Caco-2 (cell line): ENCODE measurements at regions of chr3 and their contacts with region 1.

Region 1: DNA sequence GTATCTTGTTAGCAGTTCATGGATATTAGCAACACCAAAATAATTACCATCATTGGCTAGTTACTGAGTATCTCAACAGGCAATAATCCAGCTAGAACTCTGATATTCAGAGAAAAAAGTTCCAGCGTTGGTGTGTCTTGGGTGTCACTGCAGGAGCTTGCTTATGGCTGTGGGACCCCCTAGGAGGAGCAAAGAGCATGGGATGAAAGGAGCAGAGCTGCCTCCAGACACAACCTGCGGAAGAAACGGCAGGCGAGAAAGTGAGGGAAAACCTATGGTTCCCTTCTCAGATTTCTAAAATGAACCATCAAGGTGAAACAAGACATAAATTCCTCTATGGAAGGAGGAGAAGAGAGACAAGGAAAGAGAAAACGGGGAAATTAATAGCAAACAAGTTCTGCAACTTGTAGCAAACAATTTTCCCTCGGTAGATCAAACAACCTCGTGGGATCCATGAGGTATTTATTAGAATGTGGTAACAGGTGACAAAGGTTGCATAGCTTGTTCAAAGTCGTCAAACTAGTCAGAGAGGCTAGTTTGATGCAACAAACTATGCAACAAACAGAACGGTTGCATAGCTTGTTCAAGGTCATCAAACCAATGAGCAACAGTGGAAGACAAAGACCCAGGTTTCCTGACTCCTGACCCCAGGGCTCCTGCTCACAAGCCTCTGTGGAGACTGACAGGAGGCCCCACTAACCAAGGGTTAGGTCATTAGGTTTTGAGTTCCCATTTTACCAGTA is 20.8 kb downstream of the MB21D2 start:
- DNase-seq: peak; percentile 74 to 81
- H3K4me3 ChIP-seq: no peak overlapping the region
- H3K4me3 Mint-ChIP-seq: peak overlapping the region; percentile 60
- H3K27ac Mint-ChIP-seq: peak overlapping the region; percentile 89
- H3K4me1 ChIP-seq: peaks cover 59% of the 10 kb centered on the region
- H3K4me1 Mint-ChIP-seq: peaks cover 66% of the 10 kb centered on the region
- H3K27me3 ChIP-seq: no peaks in the 10 kb centered on the region
- H3K27me3 Mint-ChIP-seq: no peaks in the 10 kb centered on the region
- CTCF ChIP-seq: no peak

Region 2: DNA sequence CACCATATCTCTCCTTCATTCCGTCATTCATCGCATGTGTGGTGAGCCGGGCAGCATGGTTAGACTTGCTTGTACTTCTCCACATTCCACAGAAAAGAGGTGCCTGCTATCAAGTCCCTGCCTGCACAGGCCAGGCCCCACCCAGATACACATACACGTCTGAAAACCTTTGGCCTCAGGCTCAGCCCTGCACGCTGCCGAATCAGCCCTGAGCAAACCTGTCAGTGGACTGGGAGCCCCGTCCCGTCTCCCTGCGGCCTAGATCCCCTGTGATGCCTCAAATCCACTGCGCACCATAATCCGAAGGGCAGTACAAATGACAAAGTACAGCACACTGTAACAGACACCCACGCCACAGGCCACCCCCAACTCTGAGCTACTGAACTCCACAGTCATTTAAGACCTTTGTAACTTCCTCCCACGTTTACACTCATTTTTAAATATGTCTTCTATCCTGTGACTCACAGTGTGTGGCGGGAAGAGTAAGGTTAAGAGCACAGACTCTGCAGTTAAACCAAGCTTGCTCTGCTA is 46.3 kb before region 1 on chr3:
- CTCF ChIA-PET with region 1: no interaction called
- POLR2A ChIA-PET with region 1: no interaction called
- intact Hi-C with region 1: loop called (anchors 1 kb)
- DNase-seq: peak; percentile 85 to 94
- H3K4me3 ChIP-seq: peak overlapping the region; percentile 6; the same call in 1 of the 2 replicates
- H3K4me3 Mint-ChIP-seq: peak overlapping the region; percentile 68
- H3K27ac Mint-ChIP-seq: peak overlapping the region; percentile 94
- H3K4me1 ChIP-seq: peaks cover 50% of the 10 kb centered on the region
- H3K4me1 Mint-ChIP-seq: peaks cover 40% of the 10 kb centered on the region
- H3K27me3 ChIP-seq: no peaks in the 10 kb centered on the region
- H3K27me3 Mint-ChIP-seq: no peaks in the 10 kb centered on the region
- CTCF ChIP-seq: no peak

Region 3: GRCh38 chr3:192879336-192880106 is 17.3 kb before region 1 on chr3:
- CTCF ChIA-PET with region 1: interaction called, 3 read pairs
- POLR2A ChIA-PET with region 1: interaction called, 3 read pairs
- intact Hi-C with region 1: loop called (anchors 1 kb)
- DNase-seq: peak; percentile 82 to 87
- H3K4me3 ChIP-seq: no peak overlapping the region
- H3K4me3 Mint-ChIP-seq: peak overlapping the region; percentile 66
- H3K27ac Mint-ChIP-seq: no peak overlapping the region
- H3K4me1 ChIP-seq: peaks cover 38% of the 10 kb centered on the region
- H3K4me1 Mint-ChIP-seq: peaks cover 43% of the 10 kb centered on the region
- H3K27me3 ChIP-seq: no peaks in the 10 kb centered on the region
- H3K27me3 Mint-ChIP-seq: no peaks in the 10 kb centered on the region
- CTCF ChIP-seq: no peak

Region 4: DNA sequence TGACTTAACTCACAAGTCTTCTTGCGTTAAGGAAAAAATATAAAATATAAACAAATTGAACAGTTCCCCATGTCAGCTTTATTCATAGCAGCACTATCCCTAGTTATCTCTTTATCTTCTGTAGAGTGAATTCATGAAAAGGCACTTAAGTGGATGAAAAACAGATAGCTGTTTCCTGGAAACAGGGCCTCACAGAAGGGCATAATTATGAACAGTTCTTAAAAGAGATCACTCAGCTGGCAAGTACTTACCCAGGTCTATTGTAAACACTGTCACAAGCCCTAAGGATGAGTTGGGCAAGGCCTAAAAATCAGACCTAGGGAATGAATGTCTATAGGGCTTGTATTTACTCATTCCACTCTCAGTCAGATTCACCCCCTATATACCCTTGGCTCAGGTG is 10.1 kb after region 1 on chr3:
- CTCF ChIA-PET with region 1: no interaction called
- POLR2A ChIA-PET with region 1: interaction called, 4 read pairs
- intact Hi-C with region 1: loop called (anchors 1 kb)
- DNase-seq: no peak
- H3K4me3 ChIP-seq: no peak overlapping the region
- H3K4me3 Mint-ChIP-seq: no peak overlapping the region
- H3K27ac Mint-ChIP-seq: peak overlapping the region; percentile 89
- H3K4me1 ChIP-seq: peaks cover 37% of the 10 kb centered on the region
- H3K4me1 Mint-ChIP-seq: peaks cover 37% of the 10 kb centered on the region
- H3K27me3 ChIP-seq: no peaks in the 10 kb centered on the region
- H3K27me3 Mint-ChIP-seq: no peaks in the 10 kb centered on the region
- CTCF ChIP-seq: no peak

Region 5: DNA sequence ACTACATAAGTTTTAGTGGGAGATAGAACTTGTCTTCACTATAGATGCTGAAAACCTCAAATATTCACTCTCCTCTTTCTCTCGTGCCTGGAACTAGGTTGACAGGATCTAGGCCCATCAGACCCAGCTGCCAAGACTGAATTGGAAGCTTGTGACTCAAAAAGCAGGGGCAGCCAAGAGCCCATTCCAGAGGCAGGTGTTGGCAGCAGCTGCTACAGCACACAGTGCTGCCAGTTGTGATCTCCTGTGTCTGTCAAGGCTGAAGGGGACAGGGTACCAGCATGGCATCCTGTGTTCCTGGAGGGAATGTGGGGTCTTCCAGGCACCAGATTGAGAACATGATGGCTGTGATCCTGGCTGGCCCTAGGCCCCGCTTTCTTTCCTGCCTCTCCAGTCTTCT is 113.3 kb after region 1 on chr3:
- CTCF ChIA-PET with region 1: no interaction called
- POLR2A ChIA-PET with region 1: no interaction called
- intact Hi-C with region 1: no loop called
- DNase-seq: no peak
- H3K4me3 ChIP-seq: no peak overlapping the region
- H3K4me3 Mint-ChIP-seq: no peak overlapping the region
- H3K27ac Mint-ChIP-seq: peak overlapping the region; percentile 55
- H3K4me1 ChIP-seq: peaks cover 15% of the 10 kb centered on the region
- H3K4me1 Mint-ChIP-seq: peaks cover 28% of the 10 kb centered on the region
- H3K27me3 ChIP-seq: no peaks in the 10 kb centered on the region
- H3K27me3 Mint-ChIP-seq: no peaks in the 10 kb centered on the region
- CTCF ChIP-seq: no peak

Region 6: DNA sequence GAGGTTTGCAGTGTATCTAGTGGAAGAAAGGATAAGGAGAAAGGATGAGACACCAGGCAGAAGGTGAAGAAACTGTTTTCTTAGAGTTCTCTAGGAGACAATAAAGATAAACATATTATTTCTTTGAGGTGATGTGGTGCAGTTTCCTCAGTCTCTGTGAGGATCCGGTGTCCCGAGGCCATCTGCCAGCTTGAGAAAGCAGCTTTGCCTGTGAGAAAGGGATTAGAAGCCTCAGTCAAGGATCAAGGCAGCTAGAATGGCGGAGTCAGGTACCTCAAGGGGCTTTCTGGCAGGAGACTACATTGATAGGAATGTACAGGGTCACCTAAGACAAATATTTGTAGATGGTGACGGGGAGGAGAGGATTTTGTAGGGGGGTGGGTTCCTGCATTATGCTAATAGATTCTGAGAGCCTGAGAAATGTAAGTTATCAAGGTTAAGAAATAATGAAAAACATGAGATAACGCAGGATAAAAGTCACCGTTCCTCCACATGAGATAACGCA is 124.7 kb after region 1 on chr3:
- CTCF ChIA-PET with region 1: interaction called, 3 read pairs
- POLR2A ChIA-PET with region 1: no interaction called
- intact Hi-C with region 1: loop called (anchors 1 kb)
- DNase-seq: peak; percentile 74 to 86
- H3K4me3 ChIP-seq: no peak overlapping the region
- H3K4me3 Mint-ChIP-seq: peak overlapping the region; percentile 0
- H3K27ac Mint-ChIP-seq: peak overlapping the region; percentile 25
- H3K4me1 ChIP-seq: peaks cover 22% of the 10 kb centered on the region
- H3K4me1 Mint-ChIP-seq: peaks cover 16% of the 10 kb centered on the region
- H3K27me3 ChIP-seq: no peaks in the 10 kb centered on the region
- H3K27me3 Mint-ChIP-seq: no peaks in the 10 kb centered on the region
- CTCF ChIP-seq: no peak